ENCODE measurements at regions of chr2 and their contacts with region 1.

Region 1: DNA sequence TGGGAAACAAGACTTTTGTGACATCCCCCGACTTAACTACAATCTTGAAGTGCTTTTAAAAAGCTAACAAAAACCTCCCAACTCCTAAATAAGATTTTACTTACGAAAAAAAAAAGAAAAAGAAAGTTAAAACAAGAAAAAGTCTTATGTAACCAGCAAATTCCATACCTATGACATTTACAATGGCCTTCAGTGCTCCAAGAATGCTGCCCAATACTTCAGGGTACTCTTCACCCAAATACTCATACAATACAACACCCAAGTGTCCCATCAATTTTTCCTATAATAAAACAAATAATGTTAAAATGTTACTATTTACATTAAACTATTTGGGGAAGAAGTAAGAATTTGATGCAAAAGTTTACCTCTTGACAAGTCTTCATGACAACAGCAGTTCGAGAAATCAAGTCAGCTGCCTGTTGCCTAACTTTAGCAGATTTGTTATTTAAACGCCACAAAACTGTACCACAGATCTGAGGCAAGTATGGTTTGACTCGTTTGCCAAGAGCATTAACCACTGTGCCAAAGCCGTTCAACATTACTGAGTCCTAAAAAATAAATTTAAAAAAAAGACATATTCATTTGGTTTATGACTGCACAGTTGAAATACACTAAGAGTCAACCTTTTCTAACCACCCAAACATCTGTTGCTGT is 34.8 kb downstream of the SF3B1 start:
- DNase-seq: no peak
- ATAC-seq: no peak
- H3K4me3 ChIP-seq: no peak overlapping the region
- H3K27ac ChIP-seq: no peak overlapping the region
- H3K4me1 ChIP-seq: no peaks in the 10 kb centered on the region
- H3K27me3 ChIP-seq: no peaks in the 10 kb centered on the region
- CTCF ChIP-seq: no peak
- POLR2A ChIP-seq: no peak

Region 2: DNA sequence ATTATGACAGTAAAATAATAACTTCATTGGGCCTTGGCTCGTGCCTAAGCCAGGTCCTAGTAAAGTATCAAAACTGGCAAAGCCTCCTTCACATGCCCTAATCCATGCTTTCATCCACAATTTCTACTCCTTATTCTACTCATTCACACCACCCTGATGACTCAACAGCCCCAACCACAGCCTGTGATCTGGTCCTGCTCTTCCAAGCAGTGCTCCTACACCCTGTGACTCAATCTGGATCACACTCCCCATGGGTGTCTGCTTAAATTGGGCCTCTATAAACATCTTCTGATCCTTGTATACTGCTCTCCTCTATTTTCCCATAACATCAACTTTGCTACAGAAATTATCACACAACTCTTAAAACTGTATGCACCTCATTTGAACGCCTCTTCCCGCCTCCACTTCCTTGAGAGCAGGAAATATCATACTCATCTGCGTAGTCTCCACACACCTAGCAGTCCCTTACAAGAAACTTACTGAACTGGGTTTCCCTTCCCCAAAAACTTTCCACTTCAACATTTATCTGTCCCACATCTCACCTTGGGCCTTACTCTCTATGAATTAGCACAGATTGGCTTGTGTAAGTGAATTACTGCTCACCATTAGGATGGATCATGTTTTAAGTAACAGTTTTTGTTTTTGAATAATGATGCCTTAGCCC is 616.5 kb before region 1 on chr2:
- in situ Hi-C with region 1: loop called in 2 of 4 experiments (anchors 10 to 25 kb)
- intact Hi-C with region 1: loop called (anchors 10 kb)
- DNase-seq: no peak
- ATAC-seq: no peak
- H3K4me3 ChIP-seq: no peak overlapping the region
- H3K27ac ChIP-seq: no peak overlapping the region
- H3K4me1 ChIP-seq: no peaks in the 10 kb centered on the region
- H3K27me3 ChIP-seq: no peaks in the 10 kb centered on the region
- CTCF ChIP-seq: no peak
- POLR2A ChIP-seq: no peak

Region 3: DNA sequence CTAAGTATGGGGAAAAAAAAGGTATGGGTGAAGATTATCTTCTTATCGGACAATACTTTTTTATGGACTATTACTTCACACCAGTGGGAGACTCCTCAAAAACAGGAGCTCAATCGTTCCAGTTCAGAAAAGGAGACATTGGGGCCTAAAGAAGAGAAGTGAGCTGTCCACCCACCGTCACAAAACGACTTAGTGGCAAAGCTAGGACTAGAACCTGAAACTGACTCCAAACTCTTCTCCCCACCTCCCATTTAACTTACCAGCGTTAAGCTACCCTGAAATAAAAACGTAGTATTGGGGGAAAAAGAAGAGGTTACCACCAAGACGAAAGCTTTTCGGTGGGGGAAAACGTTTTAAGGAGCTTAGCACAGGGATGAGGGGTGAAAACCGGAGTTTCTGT is 601.0 kb before region 1 on chr2:
- in situ Hi-C with region 1: loop called in 1 of 4 experiments (anchors 25 kb)
- intact Hi-C with region 1: no loop called
- DNase-seq: no peak
- ATAC-seq: no peak
- H3K4me3 ChIP-seq: peak overlapping the region; percentile 63 to 73 (median 70)
- H3K27ac ChIP-seq: peak overlapping the region; percentile 75 to 81 (median 78)
- H3K4me1 ChIP-seq: peaks cover 11 to 18% of the 10 kb centered on the region in 2 donors
- H3K27me3 ChIP-seq: no peaks in the 10 kb centered on the region
- CTCF ChIP-seq: no peak
- POLR2A ChIP-seq: no peak

Region 4: DNA sequence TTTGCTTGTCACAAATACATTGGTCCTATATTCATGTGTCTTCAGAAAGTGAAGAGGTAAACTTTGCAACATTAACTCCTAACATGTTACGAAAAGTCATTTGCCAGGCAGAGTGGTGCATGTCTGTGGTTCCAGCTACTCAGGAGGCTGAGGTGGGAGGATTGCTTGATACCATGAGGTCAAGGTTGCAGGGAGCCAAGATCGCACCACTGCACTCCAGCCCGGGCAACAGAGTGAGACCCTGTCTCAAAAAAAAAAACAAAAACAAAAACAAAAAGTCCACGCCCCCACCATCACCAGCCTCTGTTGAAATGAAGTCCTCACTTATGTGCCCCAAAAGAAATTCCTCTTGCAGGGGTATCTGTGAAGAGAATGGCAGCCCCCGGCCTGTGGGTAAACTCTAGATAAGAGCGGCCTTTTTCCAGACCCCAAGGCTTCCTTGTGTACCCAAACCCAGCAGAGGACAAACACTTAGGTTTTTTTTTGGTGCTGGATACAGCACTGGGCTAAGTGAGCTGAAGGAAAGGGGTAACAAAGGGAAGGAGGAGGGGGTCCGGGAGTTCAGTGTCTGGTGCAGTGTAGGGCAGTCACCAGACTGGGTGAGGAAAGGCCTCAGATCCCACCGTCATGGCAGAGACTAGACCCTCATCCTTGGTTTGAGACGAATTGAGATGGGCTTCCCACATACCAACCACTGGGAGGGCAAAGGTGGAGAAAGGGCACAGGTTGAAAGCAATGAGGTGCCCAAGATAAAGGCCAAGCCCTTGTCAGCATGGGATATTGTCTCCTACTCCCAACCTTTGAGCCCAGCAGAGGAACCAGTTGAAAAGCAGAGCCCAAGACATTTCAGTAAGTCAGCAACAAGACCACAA is 80.4 kb after region 1 on chr2:
- in situ Hi-C with region 1: no loop called
- intact Hi-C with region 1: no loop called
- DNase-seq: no peak
- ATAC-seq: no peak
- H3K4me3 ChIP-seq: no peak overlapping the region
- H3K27ac ChIP-seq: no peak overlapping the region
- H3K4me1 ChIP-seq: no peaks in the 10 kb centered on the region
- H3K27me3 ChIP-seq: no peaks in the 10 kb centered on the region
- CTCF ChIP-seq: no peak
- POLR2A ChIP-seq: no peak